Left colon (tissue), 2 donors: ENCODE measurements at regions of chr6 and their contacts with region 1.

Region 1: GRCh38 chr6:150813319-150813992 is 52.0 kb upstream of the MTHFD1L start:
- DNase-seq: peak in 1 of 2 donors; percentile 15
- ATAC-seq: peak; percentile 13

Region 2: GRCh38 chr6:150072201-150072600 is 741.3 kb before region 1 on chr6:
- intact Hi-C with region 1: loop called in 1 of 2 experiments (anchors 5 kb)
- DNase-seq: peak; percentile 92 to 96
- ATAC-seq: peak; percentile 83

Region 3: GRCh38 chr6:150417899-150418826 is 395.3 kb before region 1 on chr6:
- intact Hi-C with region 1: loop called (anchors 2 to 10 kb)
- DNase-seq: no peak
- ATAC-seq: peak; percentile 87

Region 4: GRCh38 chr6:150600301-150601017 is 213.0 kb before region 1 on chr6:
- intact Hi-C with region 1: loop called in 1 of 2 experiments (anchors 10 kb)
- DNase-seq: peak; percentile 80 to 85
- ATAC-seq: peak; percentile 57